Dendritic cell treated with granulocyte-macrophage colony-stimulating factor and Interleukin-4, amounts not matched to agents 40 ng/mL and 50 ng/mL, for 4 days (primary cell): ENCODE measurements at regions of chr15 and their contacts with region 1.

Region 1: GRCh38 chr15:49989498-49989897 is 129.5 kb downstream of the ATP8B4 start:
- H3K4me3 Mint-ChIP-seq: no peak overlapping the region
- H3K27ac Mint-ChIP-seq: peak overlapping the region; percentile 33
- H3K4me1 Mint-ChIP-seq: peaks cover 25% of the 10 kb centered on the region
- H3K27me3 Mint-ChIP-seq: no peaks in the 10 kb centered on the region

Region 2: GRCh38 chr15:49468440-49468839 is 521.1 kb before region 1 on chr15:
- intact Hi-C with region 1: loop called (anchors 10 kb)
- H3K4me3 Mint-ChIP-seq: no peak overlapping the region
- H3K27ac Mint-ChIP-seq: no peak overlapping the region
- H3K4me1 Mint-ChIP-seq: peaks cover 12% of the 10 kb centered on the region
- H3K27me3 Mint-ChIP-seq: no peaks in the 10 kb centered on the region

Region 3: DNA sequence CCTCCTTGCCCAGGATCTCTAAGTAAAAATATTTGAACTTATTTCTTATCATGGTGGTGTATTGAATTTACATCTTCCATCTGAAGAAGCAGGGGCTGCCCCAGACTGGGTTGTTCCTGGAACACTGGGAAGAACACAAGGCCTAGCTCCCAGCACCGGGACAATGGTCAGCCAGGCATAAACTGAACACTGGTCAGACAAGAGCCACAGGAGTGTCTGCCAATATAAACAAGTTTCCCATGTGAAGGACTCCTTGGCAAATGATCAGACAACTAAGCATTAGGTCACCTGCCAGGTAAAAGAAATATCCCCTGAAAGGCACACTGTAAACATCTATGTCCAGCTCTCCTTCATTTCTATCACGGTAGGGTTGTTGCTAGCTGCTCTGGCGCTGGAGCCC is 42.8 kb before region 1 on chr15:
- intact Hi-C with region 1: no loop called
- H3K4me3 Mint-ChIP-seq: no peak overlapping the region
- H3K27ac Mint-ChIP-seq: no peak overlapping the region
- H3K4me1 Mint-ChIP-seq: no peaks in the 10 kb centered on the region
- H3K27me3 Mint-ChIP-seq: no peaks in the 10 kb centered on the region

Region 4: GRCh38 chr15:50051803-50052419 is 62.4 kb after region 1 on chr15:
- intact Hi-C with region 1: loop called (anchors 10 kb)
- H3K4me3 Mint-ChIP-seq: no peak overlapping the region
- H3K27ac Mint-ChIP-seq: no peak overlapping the region
- H3K4me1 Mint-ChIP-seq: peaks cover 45% of the 10 kb centered on the region
- H3K27me3 Mint-ChIP-seq: no peaks in the 10 kb centered on the region

Region 5: GRCh38 chr15:50128266-50128665 is 138.8 kb after region 1 on chr15:
- intact Hi-C with region 1: loop called (anchors 10 kb)
- H3K4me3 Mint-ChIP-seq: no peak overlapping the region
- H3K27ac Mint-ChIP-seq: peak overlapping the region; percentile 62
- H3K4me1 Mint-ChIP-seq: peaks cover 11% of the 10 kb centered on the region
- H3K27me3 Mint-ChIP-seq: no peaks in the 10 kb centered on the region